Spleen (tissue), 13 donors: ENCODE measurements at regions of chr11 and their contacts with region 1.

Region 1: DNA sequence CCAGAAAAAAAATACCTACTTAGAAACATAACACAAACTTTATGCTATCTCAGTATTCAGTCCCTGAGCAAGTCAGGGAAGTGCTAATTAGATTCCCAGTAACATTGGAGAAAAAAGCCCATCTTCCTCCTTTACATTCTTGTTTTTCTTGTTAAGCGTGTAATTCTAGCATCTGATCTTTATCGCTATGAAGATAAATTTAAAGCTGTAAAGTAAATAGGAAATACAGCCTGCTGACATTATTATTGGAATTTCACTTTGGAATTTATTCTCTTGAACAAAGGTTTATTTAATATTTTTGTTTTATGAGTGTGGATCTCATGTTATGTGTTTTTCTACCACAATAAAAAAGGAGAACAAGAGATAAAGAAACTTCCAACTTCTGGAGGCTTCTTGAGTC is 13.9 kb downstream of the ALKBH3 start:
- DNase-seq: no peak
- H3K4me3 ChIP-seq: no peak overlapping the region
- H3K27ac ChIP-seq: no peak overlapping the region
- H3K4me1 ChIP-seq: peaks cover 0 to 10% (median 0%) of the 10 kb centered on the region in 6 donors
- H3K27me3 ChIP-seq: no peaks in the 10 kb centered on the region
- CTCF ChIP-seq: no peak
- POLR2A ChIP-seq: no peak

Region 2: DNA sequence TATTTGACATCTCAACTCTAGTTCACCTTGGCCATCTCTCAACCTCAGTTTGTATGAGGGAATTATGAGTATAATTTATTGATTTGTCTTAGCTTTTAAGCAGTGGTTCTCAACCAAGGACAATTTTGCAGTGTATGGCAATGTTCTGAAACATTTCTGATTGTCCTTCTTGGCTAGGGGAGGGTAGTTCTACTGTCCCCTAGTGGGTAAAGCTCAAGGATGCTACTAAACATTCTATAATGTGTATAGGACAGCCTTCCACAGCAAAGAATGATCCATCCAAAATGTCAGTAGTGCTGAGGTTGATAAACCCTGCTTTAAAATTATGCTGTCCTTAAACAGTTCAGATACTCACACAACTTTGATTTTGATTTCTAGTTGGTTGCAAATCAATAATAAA is 92.0 kb before region 1 on chr11:
- intact Hi-C with region 1: no loop called
- DNase-seq: no peak
- H3K4me3 ChIP-seq: no peak overlapping the region
- H3K27ac ChIP-seq: no peak overlapping the region
- H3K4me1 ChIP-seq: no peaks in the 10 kb centered on the region
- H3K27me3 ChIP-seq: no peaks in the 10 kb centered on the region
- CTCF ChIP-seq: no peak
- POLR2A ChIP-seq: no peak

Region 3: DNA sequence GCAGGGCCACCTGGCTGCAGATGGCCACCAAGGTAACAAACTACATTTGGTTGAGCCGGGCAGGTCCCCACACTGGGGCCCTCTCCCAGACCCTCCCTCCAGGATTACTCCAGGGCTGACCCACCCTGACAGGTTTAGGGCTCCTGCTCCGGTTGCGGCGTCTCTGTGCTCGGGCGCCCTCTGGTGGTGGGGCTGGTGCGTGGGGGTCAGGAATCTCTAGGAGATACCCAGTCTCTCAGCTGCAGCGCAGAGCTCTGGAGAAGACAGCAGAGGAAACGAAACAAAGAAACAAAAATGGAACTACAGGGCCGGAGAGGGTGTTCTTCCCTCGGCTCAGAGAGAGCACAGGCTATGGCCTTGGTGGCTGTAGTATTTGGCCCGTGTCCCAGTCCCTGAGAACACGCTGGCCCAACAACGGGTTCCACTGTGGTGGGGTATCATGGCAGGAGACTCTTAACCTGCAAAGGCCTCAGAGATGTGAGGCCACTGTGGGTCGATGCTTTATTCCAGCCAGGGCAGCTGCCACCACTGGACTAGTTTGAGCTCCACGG is 50.3 kb after region 1 on chr11:
- intact Hi-C with region 1: loop called (anchors 5 kb)
- DNase-seq: peak; percentile 91
- H3K4me3 ChIP-seq: peak overlapping the region; percentile 51 to 78 (median 56)
- H3K27ac ChIP-seq: peak overlapping the region in 7 of 8 donors; percentile 36 to 86 (median 80)
- H3K4me1 ChIP-seq: peaks cover 8 to 42% (median 36%) of the 10 kb centered on the region in 6 donors
- H3K27me3 ChIP-seq: peaks cover 0 to 80% (median 29%) of the 10 kb centered on the region in 7 donors
- CTCF ChIP-seq: peak; percentile 31 to 82 (median 66)
- POLR2A ChIP-seq: peak in 1 of 3 donors; percentile 12

Region 4: DNA sequence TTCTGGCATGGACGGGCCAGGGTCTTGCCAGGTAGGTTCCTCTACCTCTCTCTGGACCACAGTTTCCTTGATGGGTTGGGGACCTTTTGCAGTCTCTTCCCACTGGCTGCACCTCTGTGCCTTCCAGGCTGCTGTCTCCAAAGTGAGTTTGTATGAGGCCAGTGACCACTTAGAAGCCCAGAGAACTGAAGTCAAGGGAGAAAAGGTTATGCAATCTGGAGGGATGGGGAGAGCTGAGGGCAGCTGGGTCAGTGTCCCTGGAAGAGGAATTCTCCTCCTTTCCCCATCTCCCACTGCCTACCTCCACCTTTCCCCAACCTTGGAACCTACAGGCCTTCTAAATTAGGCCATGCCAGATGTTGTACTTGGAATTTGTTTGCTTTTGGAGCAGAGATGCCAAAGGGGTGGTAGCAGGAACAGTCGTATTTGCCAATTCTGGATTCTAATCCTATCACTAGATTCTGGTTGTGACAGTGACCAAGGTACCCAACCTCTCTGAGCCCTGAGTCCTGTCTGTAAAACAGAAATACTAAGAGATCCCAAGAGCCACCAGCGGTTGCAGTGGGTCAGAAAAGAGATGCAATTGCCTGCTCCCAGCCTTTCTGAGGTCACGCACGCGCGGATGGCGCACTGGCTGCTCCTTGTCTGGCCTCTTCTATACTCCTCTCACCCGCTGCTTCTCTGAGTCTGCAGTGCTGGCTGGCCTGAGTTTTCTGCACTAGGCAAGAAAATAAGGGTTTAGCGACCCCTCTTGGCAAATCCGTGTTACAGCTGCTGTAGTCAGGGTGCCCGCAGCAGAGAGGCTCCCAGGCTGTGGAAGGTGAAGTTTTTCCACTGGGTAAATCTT is 142.5 kb after region 1 on chr11:
- intact Hi-C with region 1: loop called (anchors 5 kb)
- DNase-seq: peak; percentile 78
- H3K4me3 ChIP-seq: no peak overlapping the region
- H3K27ac ChIP-seq: peak overlapping the region in 1 of 8 donors; percentile 7
- H3K4me1 ChIP-seq: peaks cover 0 to 6% (median 0%) of the 10 kb centered on the region in 6 donors
- H3K27me3 ChIP-seq: peaks cover 0 to 11% (median 0%) of the 10 kb centered on the region in 7 donors
- CTCF ChIP-seq: peak; percentile 27 to 78 (median 61)
- POLR2A ChIP-seq: no peak